ENCODE measurements at regions of chr16 and their contacts with region 1.

Region 1: GRCh38 chr16:89325861-89326471 is 108.5 kb downstream of the ZNF778 start:
- DNase-seq: no peak
- H3K4me3 ChIP-seq: peak overlapping the region; percentile 22 to 41
- H3K27ac ChIP-seq: peak overlapping the region; percentile 57 to 68
- H3K4me1 ChIP-seq: peaks cover 13 to 33% of the 10 kb centered on the region in 2 donors
- H3K27me3 ChIP-seq: no peaks in the 10 kb centered on the region
- CTCF ChIP-seq: no peak

Region 2: GRCh38 chr16:89395141-89395874 is 69.3 kb after region 1 on chr16:
- intact Hi-C with region 1: loop called (anchors 5 kb)
- DNase-seq: peak; percentile 34 to 96
- H3K4me3 ChIP-seq: no peak overlapping the region
- H3K27ac ChIP-seq: peak overlapping the region; percentile 47 to 51
- H3K4me1 ChIP-seq: peaks cover 0 to 22% of the 10 kb centered on the region in 2 donors
- H3K27me3 ChIP-seq: no peaks in the 10 kb centered on the region
- CTCF ChIP-seq: no peak

Region 3: GRCh38 chr16:89507834-89508590 is 182.0 kb after region 1 on chr16 and contains the start of gene SPG7:
- intact Hi-C with region 1: loop called (anchors 5 kb)
- DNase-seq: peak; percentile 19 to 87
- H3K4me3 ChIP-seq: peak within 1 kb of the TSS; percentile 66 to 97
- H3K27ac ChIP-seq: peak within 1 kb of the TSS; percentile 94 to 96
- H3K4me1 ChIP-seq: peaks cover 8 to 24% of the 10 kb centered on the region in 2 donors
- H3K27me3 ChIP-seq: no peaks in the 10 kb centered on the region
- CTCF ChIP-seq: no peak
- total RNA-seq, gene SPG7: 108 TPM

Region 4: GRCh38 chr16:89560378-89561141 is 234.6 kb after region 1 on chr16 and contains the start of gene RPL13:
- intact Hi-C with region 1: loop called (anchors 5 kb)
- DNase-seq: peak; percentile 82 to 98
- H3K4me3 ChIP-seq: peak within 1 kb of the TSS; percentile 66 to 74
- H3K27ac ChIP-seq: peak within 1 kb of the TSS; percentile 95 to 96
- H3K4me1 ChIP-seq: peaks cover 17% of the 10 kb centered on the region in 2 donors
- H3K27me3 ChIP-seq: no peaks in the 10 kb centered on the region
- CTCF ChIP-seq: no peak
- total RNA-seq, gene RPL13: 8,360 TPM

Measured in ascending aorta (tissue), 2 donors.